ENCODE measurements at regions of chrX and their contacts with region 1.

Region 1: GRCh38 chrX:13487731-13488523 is 81.5 kb upstream of the EGFL6 start:
- DNase-seq: peak; percentile 12 to 58 (median 27)
- ATAC-seq: peak; percentile 90
- H3K4me3 ChIP-seq: no peak overlapping the region
- H3K27ac ChIP-seq: no peak overlapping the region
- H3K4me1 ChIP-seq: no peaks in the 10 kb centered on the region
- H3K27me3 ChIP-seq: no peaks in the 10 kb centered on the region; a peak in 2 of 5 replicates
- CTCF ChIP-seq: peak; percentile 50 to 74 (median 73); a peak in 5 of 6 replicates
- EP300 ChIP-seq: no peak
- POLR2A ChIP-seq: no peak
- RAD21 ChIP-seq: peak; percentile 80 to 89

Region 2: DNA sequence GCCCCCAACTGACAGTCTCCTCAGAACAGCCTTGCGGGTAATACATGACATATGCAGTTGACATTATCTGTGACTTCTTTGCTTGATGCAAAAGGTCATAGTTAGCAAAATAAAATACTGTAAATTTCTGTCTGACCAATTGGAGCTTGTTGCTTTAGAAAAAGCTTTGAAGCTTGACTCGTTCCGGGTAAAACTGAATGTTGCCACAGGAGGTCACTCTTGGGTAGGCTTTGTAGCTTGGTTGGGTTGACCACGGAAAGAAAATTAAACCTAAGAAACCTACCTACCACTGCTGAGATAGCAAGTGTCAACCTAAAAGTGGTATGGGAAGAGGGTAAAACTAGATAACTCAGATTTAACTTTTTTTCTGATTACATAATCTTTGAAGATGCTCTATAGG is 673.5 kb before region 1 on chrX:
- CTCF ChIA-PET with region 1: interaction called, 5 read pairs
- POLR2A ChIA-PET with region 1: no interaction called
- in situ Hi-C with region 1: loop called (anchors 25 kb)
- intact Hi-C with region 1: no loop called
- DNase-seq: peak; percentile 13 to 47 (median 27)
- ATAC-seq: peak; percentile 84
- H3K4me3 ChIP-seq: no peak overlapping the region
- H3K27ac ChIP-seq: no peak overlapping the region
- H3K4me1 ChIP-seq: no peaks in the 10 kb centered on the region
- H3K27me3 ChIP-seq: no peaks in the 10 kb centered on the region
- CTCF ChIP-seq: peak; percentile 39 to 56 (median 50); a peak in 5 of 6 replicates
- EP300 ChIP-seq: no peak
- POLR2A ChIP-seq: no peak
- RAD21 ChIP-seq: peak; percentile 59 to 62

Region 3: GRCh38 chrX:12946838-12947544 is 540.9 kb before region 1 on chrX:
- CTCF ChIA-PET with region 1: interaction called, 9 read pairs
- POLR2A ChIA-PET with region 1: interaction called, 3 read pairs
- in situ Hi-C with region 1: no loop called
- intact Hi-C with region 1: loop called (anchors 1 kb)
- DNase-seq: peak; percentile 70 to 89 (median 72)
- ATAC-seq: peak; percentile 79
- H3K4me3 ChIP-seq: no peak overlapping the region
- H3K27ac ChIP-seq: peak overlapping the region; percentile 79
- H3K4me1 ChIP-seq: peaks cover 5 to 55% of the 10 kb centered on the region in 2 experiments; a peak in 4 of 5 replicates
- H3K27me3 ChIP-seq: no peaks in the 10 kb centered on the region
- CTCF ChIP-seq: peak; percentile 97 to 100 (median 100)
- EP300 ChIP-seq: peak; percentile 46; the same call in 1 of the 2 replicates
- POLR2A ChIP-seq: no peak
- RAD21 ChIP-seq: peak; percentile 76 to 88

Region 4: GRCh38 chrX:13092455-13092941 is 395.4 kb before region 1 on chrX:
- CTCF ChIA-PET with region 1: no interaction called
- POLR2A ChIA-PET with region 1: no interaction called
- in situ Hi-C with region 1: no loop called
- intact Hi-C with region 1: loop called (anchors 10 kb)
- DNase-seq: no peak
- ATAC-seq: peak; percentile 16; the same call in 1 of the 3 replicates
- H3K4me3 ChIP-seq: no peak overlapping the region
- H3K27ac ChIP-seq: no peak overlapping the region
- H3K4me1 ChIP-seq: peaks cover 6 to 19% of the 10 kb centered on the region in 2 experiments; a peak in 3 of 5 replicates
- H3K27me3 ChIP-seq: no peaks in the 10 kb centered on the region
- CTCF ChIP-seq: peak in 1 of 3 experiments; percentile 15; a peak in 1 of 6 replicates
- EP300 ChIP-seq: no peak
- POLR2A ChIP-seq: no peak
- RAD21 ChIP-seq: 0 out of 4 replicates have a peak, but pooled peaks of 1 of the 2 experiments have one; percentile 17

Region 5: DNA sequence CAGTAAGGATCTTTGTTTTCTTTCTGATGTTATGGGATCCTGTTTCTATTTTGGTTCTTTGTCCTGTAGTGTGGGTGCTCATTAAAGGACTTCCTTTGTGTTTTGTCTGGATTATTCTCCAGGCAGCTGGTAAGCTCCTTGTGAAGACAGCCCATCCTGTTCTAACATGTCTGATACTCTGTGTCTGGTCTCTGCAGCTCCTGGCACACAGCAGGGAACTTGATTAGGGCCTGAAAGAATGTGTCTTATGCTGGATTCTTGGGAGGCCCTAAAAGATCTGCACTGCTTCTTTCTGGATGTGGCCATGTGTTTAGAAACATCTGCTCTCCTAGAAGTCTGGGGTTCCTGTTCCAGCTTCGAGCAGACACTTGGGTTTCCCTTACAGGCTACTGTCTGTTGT is 130.0 kb before region 1 on chrX:
- CTCF ChIA-PET with region 1: no interaction called
- POLR2A ChIA-PET with region 1: no interaction called
- in situ Hi-C with region 1: no loop called
- intact Hi-C with region 1: loop called (anchors 10 kb)
- DNase-seq: no peak
- ATAC-seq: no peak
- H3K4me3 ChIP-seq: no peak overlapping the region
- H3K27ac ChIP-seq: no peak overlapping the region
- H3K4me1 ChIP-seq: no peaks in the 10 kb centered on the region
- H3K27me3 ChIP-seq: no peaks in the 10 kb centered on the region
- CTCF ChIP-seq: no peak
- EP300 ChIP-seq: no peak
- POLR2A ChIP-seq: no peak
- RAD21 ChIP-seq: no peak